ENCODE measurements at regions of chr9 and their contacts with region 1.

Region 1: DNA sequence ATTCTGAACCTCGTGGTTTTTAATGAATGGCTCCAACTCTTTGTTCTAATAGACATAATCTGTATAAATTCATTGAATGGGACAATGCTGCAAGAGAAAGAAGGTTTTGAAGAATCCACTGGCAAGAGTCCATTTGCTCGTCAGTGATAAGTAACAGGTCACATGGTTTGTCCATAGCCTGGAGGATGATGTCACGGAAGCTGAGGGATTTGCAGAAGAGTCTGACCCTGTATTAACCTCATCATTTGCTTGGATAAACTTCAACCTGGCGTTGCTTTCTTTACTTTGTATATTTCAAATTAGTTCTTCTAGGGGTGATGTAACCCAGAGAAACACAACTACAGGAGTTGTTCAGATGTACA is 197.4 kb downstream of the GAS1 start:
- DNase-seq: no peak
- H3K4me3 ChIP-seq: no peak overlapping the region
- H3K27ac ChIP-seq: no peak overlapping the region
- H3K4me1 ChIP-seq: no peaks in the 10 kb centered on the region
- H3K27me3 ChIP-seq: no peaks in the 10 kb centered on the region
- CTCF ChIP-seq: no peak

Region 2: DNA sequence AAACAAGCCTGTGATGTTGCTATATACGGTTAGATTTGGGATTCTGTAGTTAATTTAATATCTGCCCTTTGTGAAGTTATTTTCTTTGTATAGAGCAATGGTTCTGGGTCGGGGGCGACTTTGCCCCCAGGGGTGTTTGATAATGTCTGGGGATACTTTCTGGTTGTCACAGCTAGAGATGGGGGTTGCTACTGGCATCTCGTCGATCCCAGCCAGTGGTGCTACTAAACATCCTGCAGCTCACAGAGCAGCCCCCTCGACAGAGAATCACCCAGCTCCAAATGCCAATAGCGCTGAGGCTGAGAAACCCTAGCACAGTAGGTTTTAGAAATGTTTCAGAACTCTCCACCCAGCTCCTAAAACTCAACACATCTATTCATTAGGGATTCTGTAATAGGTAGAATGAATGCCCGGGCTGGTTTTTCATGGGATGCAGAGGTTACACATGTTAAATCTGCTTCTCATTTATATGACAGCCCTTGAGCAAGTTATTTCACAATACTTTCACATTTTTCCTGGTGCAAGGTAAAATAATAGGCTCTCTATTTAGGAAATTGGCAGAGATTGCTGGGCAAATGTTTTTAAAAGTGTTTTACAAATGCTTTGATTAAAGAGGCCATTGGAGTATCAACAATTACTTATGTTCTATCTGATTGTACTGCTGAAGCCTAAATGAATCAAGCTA is 900.9 kb after region 1 on chr9:
- intact Hi-C with region 1: loop called (anchors 5 kb)
- DNase-seq: no peak
- H3K4me3 ChIP-seq: no peak overlapping the region
- H3K27ac ChIP-seq: no peak overlapping the region
- H3K4me1 ChIP-seq: no peaks in the 10 kb centered on the region
- H3K27me3 ChIP-seq: no peaks in the 10 kb centered on the region
- CTCF ChIP-seq: no peak